Activated CD8-positive, alpha-beta memory T cell treated with anti-CD3 and anti-CD28 coated beads, Interleukin-2, amount 10 ng/mL, durations not matched to agents 7 days and 5 days (primary cell): ENCODE measurements at regions of chr4 and their contacts with region 1.

Region 1: GRCh38 chr4:24980064-24980690 is 50.6 kb downstream of the LGI2 start:
- DNase-seq: peak; percentile 59
- ATAC-seq: peak; percentile 47
- H3K4me3 Mint-ChIP-seq: no peak overlapping the region
- H3K27ac Mint-ChIP-seq: no peak overlapping the region
- H3K4me1 Mint-ChIP-seq: peaks cover 9% of the 10 kb centered on the region
- H3K27me3 Mint-ChIP-seq: peaks cover 10% of the 10 kb centered on the region

Region 2: GRCh38 chr4:24867766-24868296 is 112.3 kb before region 1 on chr4:
- CTCF ChIA-PET with region 1: no interaction called
- DNase-seq: no peak
- ATAC-seq: no peak
- H3K4me3 Mint-ChIP-seq: no peak overlapping the region
- H3K27ac Mint-ChIP-seq: no peak overlapping the region
- H3K4me1 Mint-ChIP-seq: no peaks in the 10 kb centered on the region
- H3K27me3 Mint-ChIP-seq: no peaks in the 10 kb centered on the region

Region 3: DNA sequence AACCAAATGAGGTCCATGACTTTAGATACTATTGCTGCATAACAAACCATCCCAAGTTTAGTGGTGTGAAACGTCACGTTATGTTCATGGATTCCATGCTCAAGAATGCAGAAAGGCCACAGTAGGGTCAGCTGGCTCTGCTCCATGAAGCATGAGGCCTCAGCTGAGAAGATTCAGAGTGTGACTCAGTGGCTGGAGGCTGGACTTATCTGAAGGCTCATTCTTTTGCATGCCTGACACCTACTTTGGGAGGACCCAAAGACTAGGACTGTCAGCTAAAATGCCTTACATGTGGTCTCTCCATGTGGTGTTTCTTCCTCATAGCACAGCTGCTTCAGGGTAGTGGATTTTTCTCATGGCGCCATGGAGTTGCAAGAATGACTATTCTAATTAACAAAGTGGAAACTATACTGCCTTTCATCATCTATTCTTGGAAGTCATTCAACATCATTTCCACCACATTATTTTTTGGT is 55.8 kb before region 1 on chr4:
- CTCF ChIA-PET with region 1: no interaction called
- DNase-seq: no peak
- ATAC-seq: no peak
- H3K4me3 Mint-ChIP-seq: no peak overlapping the region
- H3K27ac Mint-ChIP-seq: no peak overlapping the region
- H3K4me1 Mint-ChIP-seq: no peaks in the 10 kb centered on the region
- H3K27me3 Mint-ChIP-seq: no peaks in the 10 kb centered on the region

Region 4: DNA sequence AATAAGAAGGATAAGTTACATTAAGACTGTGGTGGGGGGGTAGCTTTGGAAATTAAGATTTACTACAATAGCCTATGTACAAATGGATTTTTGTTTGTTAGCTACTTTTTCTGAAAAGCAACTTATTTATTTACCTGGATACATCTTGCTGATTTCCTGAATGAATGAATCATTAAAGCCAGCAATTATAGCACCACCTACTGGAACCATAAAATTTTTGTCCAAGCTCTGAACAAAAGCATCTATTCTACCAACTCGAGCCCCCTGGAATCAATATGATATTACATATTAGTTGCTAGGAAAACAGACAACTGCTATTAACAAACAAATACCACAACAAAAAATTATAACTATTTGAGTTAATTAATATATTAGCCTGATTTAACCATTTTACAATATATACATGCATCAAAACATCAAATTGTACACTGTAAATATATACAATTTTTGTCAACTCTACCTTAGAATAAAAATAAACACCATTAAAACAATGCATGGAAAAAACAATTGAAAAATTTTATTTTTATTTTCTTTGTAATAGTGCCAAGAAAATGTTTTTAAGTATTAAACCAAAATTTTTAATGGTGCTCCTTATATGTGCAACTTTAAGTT is 164.8 kb after region 1 on chr4:
- CTCF ChIA-PET with region 1: interaction called, 17 read pairs
- DNase-seq: no peak
- ATAC-seq: no peak
- H3K4me3 Mint-ChIP-seq: no peak overlapping the region
- H3K27ac Mint-ChIP-seq: no peak overlapping the region
- H3K4me1 Mint-ChIP-seq: peaks cover 2% of the 10 kb centered on the region
- H3K27me3 Mint-ChIP-seq: no peaks in the 10 kb centered on the region

Region 5: GRCh38 chr4:25367004-25367621 is 386.9 kb after region 1 on chr4:
- CTCF ChIA-PET with region 1: interaction called, 24 read pairs
- DNase-seq: no peak
- ATAC-seq: no peak
- H3K4me3 Mint-ChIP-seq: no peak overlapping the region
- H3K27ac Mint-ChIP-seq: no peak overlapping the region
- H3K4me1 Mint-ChIP-seq: no peaks in the 10 kb centered on the region
- H3K27me3 Mint-ChIP-seq: no peaks in the 10 kb centered on the region